ENCODE measurements at regions of chr6 and their contacts with region 1.

Region 1: GRCh38 chr6:34656378-34657036 is 40.1 kb downstream of the ILRUN start:
- DNase-seq: peak; percentile 41
- ATAC-seq: peak; percentile 72
- H3K4me3 Mint-ChIP-seq: peak overlapping the region; percentile 76
- H3K27ac Mint-ChIP-seq: peak overlapping the region; percentile 90
- H3K4me1 Mint-ChIP-seq: peaks cover 42% of the 10 kb centered on the region
- H3K27me3 Mint-ChIP-seq: no peaks in the 10 kb centered on the region

Region 2: GRCh38 chr6:34671801-34672656 is 15.5 kb after region 1 on chr6:
- CTCF ChIA-PET with region 1: interaction called, 28 read pairs
- POLR2A ChIA-PET with region 1: interaction called, 28 read pairs
- DNase-seq: peak; percentile 87
- ATAC-seq: peak; percentile 99
- H3K4me3 Mint-ChIP-seq: peak overlapping the region; percentile 65
- H3K27ac Mint-ChIP-seq: peak overlapping the region; percentile 96
- H3K4me1 Mint-ChIP-seq: peaks cover 47% of the 10 kb centered on the region
- H3K27me3 Mint-ChIP-seq: no peaks in the 10 kb centered on the region

Measured in activated CD8-positive, alpha-beta T cell treated with anti-CD3 and anti-CD28 coated beads, Interleukin-2, amount 10 ng/mL, durations not matched to agents 7 days and 5 days (primary cell).